ENCODE measurements at regions of chr11 and their contacts with region 1.

Region 1: GRCh38 chr11:83285771-83286528 is at the start of gene CCDC90B:
- DNase-seq: peak; percentile 89 to 98
- H3K4me3 ChIP-seq: peak within 1 kb of the TSS; percentile 86 to 87
- H3K27ac ChIP-seq: peak within 1 kb of the TSS; percentile 94 to 98
- H3K4me1 ChIP-seq: peaks cover 0 to 20% of the 10 kb centered on the region in 2 donors
- H3K27me3 ChIP-seq: no peaks in the 10 kb centered on the region
- CTCF ChIP-seq: peak in 1 of 3 experiments; percentile 22
- total RNA-seq, gene CCDC90B: 8.2 TPM

Region 2: DNA sequence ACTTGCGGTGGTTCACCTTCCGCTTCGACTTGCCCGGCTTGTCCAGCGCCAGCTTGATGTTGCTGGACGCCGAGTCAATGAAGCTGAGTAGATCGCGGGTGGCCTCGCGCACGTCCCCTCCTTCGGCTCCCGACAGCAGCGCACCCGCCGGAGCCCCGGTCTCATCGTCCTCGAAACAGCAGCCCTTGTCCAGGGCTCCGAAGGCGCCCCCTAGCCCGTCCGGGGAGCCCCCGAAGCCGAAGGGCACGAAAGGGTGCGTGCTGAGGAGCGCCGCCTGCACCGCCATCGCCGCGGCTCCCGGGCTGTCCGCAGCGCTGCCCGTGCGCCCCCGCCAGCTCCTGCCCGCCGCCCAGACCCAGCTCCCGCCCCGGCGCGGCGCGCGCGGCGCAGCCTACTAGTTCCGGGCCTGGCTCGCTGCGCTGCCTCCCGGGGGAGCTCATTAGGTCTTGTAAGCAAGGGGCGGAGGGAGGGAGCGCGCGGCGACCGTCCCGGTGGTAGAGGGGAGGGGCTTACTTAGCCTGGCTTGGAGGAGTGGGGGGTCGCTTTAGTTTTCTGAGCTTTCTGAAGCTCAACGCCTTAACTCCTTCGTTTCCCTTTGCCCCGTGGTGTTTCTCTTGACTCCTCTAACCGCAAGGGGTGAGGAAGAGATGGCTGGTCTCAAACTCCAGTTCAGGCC is 552.4 kb before region 1 on chr11 and contains the start of gene FAM181B:
- intact Hi-C with region 1: loop called (anchors 5 kb)
- DNase-seq: peak in 1 of 2 donors; percentile 81
- H3K4me3 ChIP-seq: peak within 1 kb of the TSS; percentile 80 to 90
- H3K27ac ChIP-seq: peak within 1 kb of the TSS; percentile 66 to 68
- H3K4me1 ChIP-seq: no peaks in the 10 kb centered on the region
- H3K27me3 ChIP-seq: no peaks in the 10 kb centered on the region
- CTCF ChIP-seq: no peak
- total RNA-seq, gene FAM181B: not detected

Region 3: GRCh38 chr11:83044958-83045712 is 240.8 kb before region 1 on chr11:
- intact Hi-C with region 1: no loop called
- DNase-seq: no peak
- H3K4me3 ChIP-seq: no peak overlapping the region
- H3K27ac ChIP-seq: no peak overlapping the region
- H3K4me1 ChIP-seq: peaks cover 0 to 6% of the 10 kb centered on the region in 2 donors
- H3K27me3 ChIP-seq: no peaks in the 10 kb centered on the region
- CTCF ChIP-seq: no peak

Region 4: DNA sequence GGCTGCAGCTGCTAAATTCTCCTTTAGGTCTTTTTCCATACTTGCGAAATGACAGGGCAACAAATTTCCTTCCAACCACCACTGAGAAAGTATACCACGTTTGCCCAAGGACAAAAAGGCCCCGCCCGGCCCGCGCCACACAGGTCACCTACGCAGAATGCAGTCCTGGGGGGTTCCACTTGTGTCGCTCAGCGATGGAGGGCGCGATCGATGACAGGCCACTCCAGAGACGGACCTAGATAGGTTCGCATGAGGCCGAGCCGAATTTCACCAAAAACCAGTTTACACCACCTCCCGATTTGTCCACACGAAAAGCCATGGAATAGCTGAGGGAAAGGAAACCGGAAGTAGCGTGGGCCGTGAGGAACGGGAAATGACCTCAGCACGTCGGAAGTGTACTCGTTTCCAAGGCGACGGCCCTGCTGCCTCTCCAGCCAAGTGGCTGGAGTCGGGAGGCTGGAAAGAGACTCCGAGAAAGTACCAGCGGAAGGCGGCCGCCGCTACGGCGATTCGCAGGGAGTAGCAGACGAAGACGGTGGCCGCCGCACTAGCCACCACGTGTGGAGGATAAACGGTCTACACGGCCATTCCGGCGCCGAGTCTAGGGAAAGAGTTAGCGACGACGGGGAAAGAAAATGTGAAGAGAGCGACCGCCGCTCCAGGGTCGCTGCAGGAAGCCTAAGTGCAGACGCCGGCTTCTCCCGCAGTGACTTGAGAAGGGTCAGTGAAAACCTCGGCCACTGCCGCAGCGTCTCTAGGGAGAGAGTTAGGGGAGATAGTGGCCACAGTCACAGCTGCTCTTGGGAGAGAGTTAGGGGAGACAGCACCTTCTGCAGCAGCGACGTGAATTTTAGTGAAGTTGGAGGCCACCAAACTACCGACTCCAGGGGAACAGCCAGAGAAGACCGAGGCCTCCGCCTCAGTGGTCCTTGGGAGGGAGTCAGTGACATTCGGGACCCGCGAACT is 92.4 kb before region 1 on chr11 and contains the start of gene ANKRD42:
- intact Hi-C with region 1: loop called (anchors 1 kb)
- DNase-seq: peak; percentile 78 to 97
- H3K4me3 ChIP-seq: peak within 1 kb of the TSS; percentile 73 to 93
- H3K27ac ChIP-seq: peak within 1 kb of the TSS; percentile 86 to 92
- H3K4me1 ChIP-seq: peaks cover 4 to 23% of the 10 kb centered on the region in 2 donors
- H3K27me3 ChIP-seq: no peaks in the 10 kb centered on the region
- CTCF ChIP-seq: no peak
- total RNA-seq, gene ANKRD42: 25.1 TPM

Region 5: DNA sequence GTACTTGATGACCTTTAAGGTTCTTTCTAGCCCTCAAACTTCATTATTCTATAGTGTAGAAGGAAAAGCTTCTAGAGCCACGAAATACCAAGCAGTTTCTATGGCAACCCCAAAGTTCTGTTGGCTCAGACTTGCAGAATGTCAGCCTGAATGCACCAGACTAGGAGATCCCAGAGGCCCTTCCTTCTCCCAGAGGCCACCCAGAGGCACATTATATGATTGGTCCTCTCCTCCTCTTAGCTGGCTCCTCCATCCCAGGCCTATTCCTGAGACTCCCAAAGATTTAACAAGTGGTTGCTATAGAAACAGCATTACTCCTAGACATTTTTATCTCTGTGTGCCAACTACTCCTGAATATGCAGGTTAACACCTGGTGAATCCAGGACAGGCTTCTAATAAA is 69.4 kb after region 1 on chr11:
- intact Hi-C with region 1: no loop called
- DNase-seq: no peak
- H3K4me3 ChIP-seq: no peak overlapping the region
- H3K27ac ChIP-seq: no peak overlapping the region
- H3K4me1 ChIP-seq: no peaks in the 10 kb centered on the region
- H3K27me3 ChIP-seq: no peaks in the 10 kb centered on the region
- CTCF ChIP-seq: no peak

Region 6: GRCh38 chr11:83471831-83472727 is 186.1 kb after region 1 on chr11:
- intact Hi-C with region 1: no loop called
- DNase-seq: no peak
- H3K4me3 ChIP-seq: no peak overlapping the region
- H3K27ac ChIP-seq: no peak overlapping the region
- H3K4me1 ChIP-seq: no peaks in the 10 kb centered on the region
- H3K27me3 ChIP-seq: no peaks in the 10 kb centered on the region
- CTCF ChIP-seq: no peak

Region 7: GRCh38 chr11:83493917-83494316 is 208.0 kb after region 1 on chr11:
- intact Hi-C with region 1: no loop called
- DNase-seq: no peak
- H3K4me3 ChIP-seq: no peak overlapping the region
- H3K27ac ChIP-seq: no peak overlapping the region
- H3K4me1 ChIP-seq: no peaks in the 10 kb centered on the region
- H3K27me3 ChIP-seq: no peaks in the 10 kb centered on the region
- CTCF ChIP-seq: no peak